ENCODE measurements at regions of chr3 and their contacts with region 1.

Region 1: DNA sequence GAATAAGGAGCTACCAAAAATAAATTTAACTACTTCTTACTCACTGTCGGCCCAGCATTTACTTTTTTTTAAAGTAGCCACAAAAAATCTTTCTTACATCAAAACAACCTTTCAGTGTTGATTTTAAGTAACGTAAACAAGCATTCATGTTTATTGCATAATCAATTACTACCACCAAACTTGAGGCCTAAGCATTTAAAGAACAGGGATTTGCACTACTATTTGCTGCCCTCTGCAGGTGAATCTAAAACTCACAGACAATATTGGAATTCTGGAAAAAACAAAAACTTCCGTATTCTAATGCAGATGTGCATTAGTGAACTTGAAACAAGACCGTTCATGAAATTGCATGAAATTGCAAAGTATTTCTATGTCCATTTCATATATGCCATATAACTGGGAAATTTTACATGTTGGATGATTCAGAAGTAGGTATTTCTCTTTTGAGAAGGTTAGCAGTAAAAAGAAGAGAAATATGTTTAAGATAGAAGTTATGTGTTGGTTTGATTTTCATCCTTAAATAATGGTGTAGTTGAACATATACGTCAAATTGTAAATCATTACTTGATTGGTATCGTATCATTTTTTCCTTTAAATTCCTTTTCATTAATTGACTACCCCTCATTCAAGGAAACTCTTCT is 55.6 kb downstream of the CGGBP1 start:
- DNase-seq: peak in 1 of 2 experiments; percentile 44
- H3K4me3 ChIP-seq: no peak overlapping the region
- H3K4me3 Mint-ChIP-seq: no peak overlapping the region
- H3K27ac Mint-ChIP-seq: no peak overlapping the region
- H3K4me1 ChIP-seq: no peaks in the 10 kb centered on the region
- H3K4me1 Mint-ChIP-seq: no peaks in the 10 kb centered on the region
- H3K27me3 ChIP-seq: no peaks in the 10 kb centered on the region
- H3K27me3 Mint-ChIP-seq: peaks cover 4% of the 10 kb centered on the region
- CTCF ChIP-seq: peak; percentile 60 to 70

Region 2: DNA sequence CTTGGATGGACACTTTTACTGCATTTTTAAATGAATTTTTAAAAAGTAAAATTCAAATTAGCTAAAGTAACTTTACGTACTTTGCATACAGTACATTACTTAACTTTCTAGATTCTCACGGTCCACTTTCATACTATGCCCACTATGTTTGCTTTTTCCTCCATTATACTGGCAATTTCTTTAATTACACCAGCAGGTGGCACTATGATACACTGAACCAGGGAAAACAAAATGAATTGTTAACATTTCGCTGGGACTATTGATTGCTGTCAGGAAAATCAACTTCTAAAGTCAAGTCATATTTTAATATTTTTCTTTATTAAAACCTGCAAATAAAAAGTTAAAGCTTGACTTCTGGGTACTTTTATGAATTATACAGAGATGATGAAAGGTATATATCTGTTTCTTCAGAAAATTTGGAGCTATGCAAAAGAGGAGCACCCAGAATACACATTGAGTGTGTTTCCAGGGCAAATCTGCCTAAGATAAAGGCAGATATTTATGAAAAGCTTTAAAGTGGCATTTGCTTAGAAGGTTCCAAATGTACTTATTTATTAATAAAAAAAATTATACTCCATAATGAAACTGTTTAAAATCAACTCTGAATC is 705.0 kb before region 1 on chr3:
- CTCF ChIA-PET with region 1: no interaction called
- POLR2A ChIA-PET with region 1: no interaction called
- intact Hi-C with region 1: loop called (anchors 1 kb)
- DNase-seq: peak in 1 of 2 experiments; percentile 35
- H3K4me3 ChIP-seq: no peak overlapping the region
- H3K4me3 Mint-ChIP-seq: no peak overlapping the region
- H3K27ac Mint-ChIP-seq: no peak overlapping the region
- H3K4me1 ChIP-seq: no peaks in the 10 kb centered on the region
- H3K4me1 Mint-ChIP-seq: no peaks in the 10 kb centered on the region
- H3K27me3 ChIP-seq: no peaks in the 10 kb centered on the region
- H3K27me3 Mint-ChIP-seq: no peaks in the 10 kb centered on the region
- CTCF ChIP-seq: peak; percentile 49 to 52

Region 3: DNA sequence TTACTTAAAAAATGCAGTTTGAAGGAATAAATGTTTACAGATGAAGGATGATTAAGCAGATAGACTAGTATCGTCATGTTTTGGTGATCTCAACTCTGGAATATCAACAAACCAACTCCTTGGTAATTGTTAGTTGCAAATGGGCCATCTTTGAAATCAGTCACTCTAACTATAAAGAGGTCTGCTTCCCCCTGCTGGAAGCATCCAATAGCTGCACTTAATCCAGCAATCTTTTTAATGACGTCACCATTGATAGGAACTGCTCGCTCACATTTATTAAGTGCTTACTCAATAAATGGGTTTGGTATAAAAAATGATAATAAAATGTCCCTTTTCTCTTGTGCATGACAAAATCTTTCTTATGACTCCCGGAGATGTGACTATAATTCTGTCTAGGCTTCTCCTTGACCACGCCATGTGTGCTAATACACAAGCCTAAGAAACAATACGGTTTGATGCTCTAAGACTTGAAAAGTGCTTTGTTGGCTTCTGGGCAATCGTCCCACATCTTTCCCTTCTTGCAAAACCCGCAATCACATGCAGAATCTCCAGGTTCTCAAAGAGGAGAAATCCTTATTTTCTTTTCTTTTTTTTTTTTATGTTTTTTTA is 499.2 kb before region 1 on chr3:
- CTCF ChIA-PET with region 1: no interaction called
- POLR2A ChIA-PET with region 1: no interaction called
- intact Hi-C with region 1: loop called (anchors 5 kb)
- DNase-seq: peak in 1 of 2 experiments; percentile 57
- H3K4me3 ChIP-seq: no peak overlapping the region
- H3K4me3 Mint-ChIP-seq: no peak overlapping the region
- H3K27ac Mint-ChIP-seq: no peak overlapping the region
- H3K4me1 ChIP-seq: no peaks in the 10 kb centered on the region
- H3K4me1 Mint-ChIP-seq: no peaks in the 10 kb centered on the region
- H3K27me3 ChIP-seq: no peaks in the 10 kb centered on the region
- H3K27me3 Mint-ChIP-seq: no peaks in the 10 kb centered on the region
- CTCF ChIP-seq: peak; percentile 66 to 73

Region 4: GRCh38 chr3:87900061-87900460 is 103.2 kb before region 1 on chr3:
- CTCF ChIA-PET with region 1: no interaction called
- POLR2A ChIA-PET with region 1: no interaction called
- intact Hi-C with region 1: loop called (anchors 2 kb)
- DNase-seq: peak in 1 of 2 experiments; percentile 3
- H3K4me3 ChIP-seq: no peak overlapping the region
- H3K4me3 Mint-ChIP-seq: no peak overlapping the region
- H3K27ac Mint-ChIP-seq: no peak overlapping the region
- H3K4me1 ChIP-seq: no peaks in the 10 kb centered on the region
- H3K4me1 Mint-ChIP-seq: no peaks in the 10 kb centered on the region
- H3K27me3 ChIP-seq: no peaks in the 10 kb centered on the region
- H3K27me3 Mint-ChIP-seq: no peaks in the 10 kb centered on the region
- CTCF ChIP-seq: no peak

Region 5: GRCh38 chr3:88180398-88180999 is 177.3 kb after region 1 on chr3:
- CTCF ChIA-PET with region 1: no interaction called
- POLR2A ChIA-PET with region 1: no interaction called
- intact Hi-C with region 1: loop called (anchors 2 kb)
- DNase-seq: peak in 1 of 2 experiments; percentile 22
- H3K4me3 ChIP-seq: no peak overlapping the region
- H3K4me3 Mint-ChIP-seq: no peak overlapping the region
- H3K27ac Mint-ChIP-seq: no peak overlapping the region
- H3K4me1 ChIP-seq: no peaks in the 10 kb centered on the region
- H3K4me1 Mint-ChIP-seq: no peaks in the 10 kb centered on the region
- H3K27me3 ChIP-seq: no peaks in the 10 kb centered on the region
- H3K27me3 Mint-ChIP-seq: peaks cover 2% of the 10 kb centered on the region
- CTCF ChIP-seq: peak in 1 of 2 experiments; percentile 38

Region 6: GRCh38 chr3:88262527-88262926 is 259.3 kb after region 1 on chr3:
- CTCF ChIA-PET with region 1: no interaction called
- POLR2A ChIA-PET with region 1: no interaction called
- intact Hi-C with region 1: no loop called
- DNase-seq: no peak
- H3K4me3 ChIP-seq: no peak overlapping the region
- H3K4me3 Mint-ChIP-seq: no peak overlapping the region
- H3K27ac Mint-ChIP-seq: no peak overlapping the region
- H3K4me1 ChIP-seq: no peaks in the 10 kb centered on the region
- H3K4me1 Mint-ChIP-seq: no peaks in the 10 kb centered on the region
- H3K27me3 ChIP-seq: no peaks in the 10 kb centered on the region
- H3K27me3 Mint-ChIP-seq: peaks cover 3% of the 10 kb centered on the region
- CTCF ChIP-seq: no peak

Measured in Caco-2 (cell line).